Activated T-helper 2 cell treated with anti-CD3 and anti-CD28 coated beads, Interferon-gamma antibody, Interleukin-2, Interleukin-4, amounts not matched to agents 10 μg/mL and 5 μg/mL and 100 μg/mL, durations not matched to agents 14 hours and 24 hours and 36 hours (primary cell): ENCODE measurements at regions of chr10 and their contacts with region 1.

Region 1: DNA sequence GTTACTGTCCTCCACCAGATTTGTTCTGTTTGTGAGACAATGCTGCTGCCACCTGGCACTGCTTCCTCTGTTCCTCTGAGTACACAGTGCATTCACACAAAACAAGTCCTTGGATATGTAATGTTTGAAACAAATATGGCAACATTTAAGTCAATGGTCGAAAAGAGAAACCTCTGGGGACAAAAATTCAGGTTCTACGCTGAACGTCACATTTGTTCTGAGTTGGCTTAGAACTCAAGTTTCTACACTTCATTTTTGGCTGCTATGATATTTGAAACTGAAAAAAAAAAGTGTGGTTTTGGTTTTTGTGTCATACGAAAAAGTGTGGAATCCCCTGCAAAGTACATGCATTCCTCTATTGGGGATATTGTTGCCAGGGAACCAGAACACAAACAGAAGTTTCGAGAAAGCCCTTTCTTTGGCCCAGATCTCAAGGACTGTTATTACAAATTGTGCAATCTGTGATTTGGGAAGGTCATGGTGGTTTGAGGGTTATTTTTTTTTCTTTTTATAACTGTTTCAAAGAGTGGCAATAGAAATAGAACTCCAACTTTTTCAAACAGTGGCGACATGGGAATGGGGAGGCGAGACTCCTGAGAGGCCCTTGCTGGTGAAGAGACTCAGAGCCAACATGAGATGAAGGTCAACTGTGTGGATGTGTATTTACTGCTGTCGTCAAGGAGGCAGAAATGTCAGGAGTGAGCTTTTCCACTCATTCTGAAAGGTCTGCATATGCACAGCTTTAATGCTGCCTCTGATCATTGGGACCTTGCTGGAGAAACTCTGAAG is 127.5 kb downstream of the CUBN start:
- DNase-seq: no peak
- H3K4me3 Mint-ChIP-seq: peak overlapping the region; percentile 46
- H3K27ac Mint-ChIP-seq: peak overlapping the region; percentile 99
- H3K4me1 Mint-ChIP-seq: peaks cover 33% of the 10 kb centered on the region
- H3K27me3 Mint-ChIP-seq: peaks cover 69% of the 10 kb centered on the region

Region 2: DNA sequence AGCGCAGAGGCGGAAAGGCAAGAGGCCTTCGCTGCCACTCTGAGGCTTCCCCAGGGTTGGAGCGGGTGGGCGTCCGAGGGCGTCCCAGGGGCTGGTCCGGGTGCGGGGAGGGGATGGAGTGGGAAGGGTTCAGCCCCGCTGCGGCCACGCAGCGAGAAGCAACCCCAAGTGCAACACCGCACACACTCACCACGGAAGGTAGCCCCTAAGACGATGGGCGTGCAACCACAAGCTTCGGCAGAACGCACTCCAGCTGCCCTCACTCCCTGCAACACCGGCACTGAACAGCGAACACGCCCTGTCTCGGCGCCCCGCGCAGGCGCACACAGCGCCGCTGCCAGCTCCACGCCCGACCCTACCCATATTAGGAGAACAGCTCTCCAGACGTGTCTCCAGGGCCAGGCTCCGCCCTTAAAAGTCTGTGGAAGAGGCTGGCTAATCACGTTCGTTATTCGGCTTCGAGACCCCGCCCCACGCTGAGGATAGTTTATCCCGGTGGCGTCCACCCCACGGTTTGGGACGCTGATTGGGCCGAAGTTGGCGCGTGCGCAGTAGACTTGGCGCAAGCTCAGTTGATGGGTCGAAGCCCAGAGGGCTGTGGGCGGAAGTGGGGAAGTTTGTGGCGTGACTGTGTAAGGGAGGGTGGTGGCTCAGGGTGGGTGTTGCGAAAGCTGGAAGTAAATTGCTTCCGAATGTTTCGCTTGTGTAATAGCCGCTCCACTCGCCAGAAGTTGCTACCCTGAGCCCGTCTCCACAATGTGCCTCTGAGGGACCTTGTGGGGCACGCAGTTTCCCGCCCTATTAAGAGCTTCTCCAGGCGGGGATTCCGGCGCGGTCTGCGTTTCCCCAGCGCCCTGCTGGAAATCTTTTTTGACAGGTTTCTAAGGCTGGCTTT is 184.8 kb before region 1 on chr10 and contains the start of gene RSU1:
- intact Hi-C with region 1: loop called (anchors 1 kb)
- DNase-seq: peak; percentile 100
- H3K4me3 Mint-ChIP-seq: peak within 1 kb of the TSS; percentile 93
- H3K27ac Mint-ChIP-seq: peak within 1 kb of the TSS; percentile 79
- H3K4me1 Mint-ChIP-seq: peaks cover 27% of the 10 kb centered on the region
- H3K27me3 Mint-ChIP-seq: peaks cover 10% of the 10 kb centered on the region
- total RNA-seq, gene RSU1: 49.1 and 54.0 TPM in 2 replicates

Region 3: DNA sequence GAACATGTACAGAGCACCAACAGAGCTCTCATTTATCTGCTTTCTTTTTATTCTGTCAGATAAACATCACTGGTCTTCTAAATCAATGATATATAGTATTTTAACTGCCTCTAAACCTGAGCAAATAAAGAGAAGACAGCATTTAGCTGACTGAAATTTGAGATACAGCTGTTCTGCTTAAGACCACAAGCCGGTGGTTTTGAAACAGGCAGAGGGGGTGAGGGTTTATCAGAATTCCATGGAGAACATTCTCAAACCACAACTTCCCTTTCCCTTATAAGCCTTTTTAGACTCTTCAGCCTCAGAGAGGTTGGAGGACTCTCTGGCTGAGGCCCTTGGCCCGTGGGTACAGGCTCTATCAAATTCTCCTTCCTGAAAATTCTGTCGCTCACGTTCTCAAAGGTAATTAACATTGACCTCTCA is 97.5 kb before region 1 on chr10:
- intact Hi-C with region 1: loop called (anchors 2 kb)
- DNase-seq: no peak
- H3K4me3 Mint-ChIP-seq: no peak overlapping the region
- H3K27ac Mint-ChIP-seq: no peak overlapping the region
- H3K4me1 Mint-ChIP-seq: peaks cover 7% of the 10 kb centered on the region
- H3K27me3 Mint-ChIP-seq: peaks cover 6% of the 10 kb centered on the region

Region 4: DNA sequence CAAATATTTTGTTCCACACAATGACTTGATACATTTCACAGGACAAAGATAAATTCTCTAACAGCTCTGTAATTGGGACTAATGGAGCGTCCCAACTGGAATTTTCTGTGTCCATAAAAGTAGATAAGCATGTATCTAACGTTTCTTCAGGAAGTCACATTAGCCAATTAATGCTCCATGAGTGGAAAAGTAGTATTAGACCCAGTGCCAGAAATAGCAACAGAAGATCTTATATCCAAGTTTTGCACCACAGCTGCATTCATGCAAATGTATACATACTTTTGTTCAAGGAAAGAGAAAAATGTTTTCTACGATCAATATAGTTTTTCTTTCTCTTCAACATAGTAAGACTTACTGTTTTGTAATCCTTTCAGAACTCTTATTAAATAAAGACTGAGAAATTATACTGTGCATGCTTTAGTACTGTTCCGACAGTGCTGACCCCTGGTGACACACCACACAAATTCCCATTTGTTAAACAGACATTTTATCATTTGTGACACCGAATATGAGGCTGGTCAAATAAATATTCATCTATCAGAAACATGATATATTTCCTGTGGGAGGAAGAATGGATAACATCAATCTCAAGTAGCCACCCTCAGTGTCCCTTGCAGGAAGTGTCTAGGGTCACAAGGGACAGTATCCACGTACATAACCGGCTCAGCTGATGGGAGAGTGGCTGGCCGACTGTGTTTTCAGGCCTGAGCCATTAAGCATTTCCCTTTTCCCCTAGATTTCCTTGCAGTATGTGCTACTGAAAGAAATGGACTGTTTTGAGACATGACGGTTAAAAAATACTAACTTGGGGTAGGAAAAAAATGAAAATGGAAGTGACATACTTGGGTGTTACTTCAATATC is 82.8 kb before region 1 on chr10:
- intact Hi-C with region 1: no loop called
- DNase-seq: no peak
- H3K4me3 Mint-ChIP-seq: no peak overlapping the region
- H3K27ac Mint-ChIP-seq: no peak overlapping the region
- H3K4me1 Mint-ChIP-seq: no peaks in the 10 kb centered on the region
- H3K27me3 Mint-ChIP-seq: peaks cover 6% of the 10 kb centered on the region

Region 5: DNA sequence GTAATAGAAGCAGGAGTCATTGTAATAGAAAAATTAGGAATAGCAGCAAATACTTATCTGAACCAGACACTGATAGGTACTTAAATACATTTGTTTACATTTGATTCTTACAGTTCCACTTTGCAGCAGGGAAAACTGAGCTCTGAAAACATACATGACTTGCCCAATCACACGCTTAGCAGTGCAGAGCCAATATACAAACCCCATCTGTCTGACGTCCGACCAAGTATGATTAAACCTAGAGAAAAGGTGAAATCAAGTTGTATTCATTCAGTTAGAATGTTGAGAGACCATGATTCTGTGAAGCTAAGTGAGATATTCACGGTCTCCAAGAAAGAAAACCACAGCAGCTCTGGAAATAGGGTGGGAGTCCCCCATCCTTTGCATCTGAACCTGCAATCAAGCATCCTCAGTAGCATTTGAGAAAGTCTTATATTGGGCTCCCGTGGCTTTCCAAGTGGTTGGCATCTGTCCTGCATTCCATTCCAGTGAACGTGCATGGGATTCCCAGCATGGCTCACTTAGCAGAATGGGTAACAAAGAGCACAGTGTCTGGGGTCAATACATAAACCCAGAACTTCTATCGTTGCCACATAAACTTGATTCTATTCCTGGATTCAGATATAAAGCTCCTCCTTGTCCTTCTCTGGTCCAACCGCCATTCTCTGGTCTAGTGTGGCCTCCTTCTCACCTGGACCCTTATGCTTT is 36.3 kb before region 1 on chr10:
- intact Hi-C with region 1: loop called (anchors 2 kb)
- DNase-seq: no peak
- H3K4me3 Mint-ChIP-seq: no peak overlapping the region
- H3K27ac Mint-ChIP-seq: no peak overlapping the region
- H3K4me1 Mint-ChIP-seq: peaks cover 12% of the 10 kb centered on the region
- H3K27me3 Mint-ChIP-seq: peaks cover 28% of the 10 kb centered on the region

Region 6: DNA sequence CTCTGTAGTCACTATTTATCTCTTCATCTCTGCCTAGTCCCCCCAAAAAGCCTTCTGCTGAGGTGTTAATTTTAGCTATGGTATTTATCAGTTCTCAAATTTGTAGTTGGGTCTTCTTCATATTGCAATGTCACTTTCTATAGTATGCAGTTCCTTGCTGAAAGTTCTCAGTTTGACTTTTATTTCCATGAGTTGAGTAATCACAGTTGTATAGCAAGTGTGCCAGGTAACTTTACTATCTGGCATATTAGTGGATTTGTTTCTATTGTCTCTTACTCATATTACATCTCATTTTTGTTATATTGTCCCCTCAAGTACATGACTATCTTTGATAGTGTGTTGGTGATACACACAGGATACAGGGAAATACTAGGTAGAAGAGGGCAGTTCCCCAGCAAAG is 25.4 kb before region 1 on chr10:
- intact Hi-C with region 1: no loop called
- DNase-seq: no peak
- H3K4me3 Mint-ChIP-seq: no peak overlapping the region
- H3K27ac Mint-ChIP-seq: no peak overlapping the region
- H3K4me1 Mint-ChIP-seq: peaks cover 7% of the 10 kb centered on the region
- H3K27me3 Mint-ChIP-seq: peaks cover 29% of the 10 kb centered on the region

Region 7: DNA sequence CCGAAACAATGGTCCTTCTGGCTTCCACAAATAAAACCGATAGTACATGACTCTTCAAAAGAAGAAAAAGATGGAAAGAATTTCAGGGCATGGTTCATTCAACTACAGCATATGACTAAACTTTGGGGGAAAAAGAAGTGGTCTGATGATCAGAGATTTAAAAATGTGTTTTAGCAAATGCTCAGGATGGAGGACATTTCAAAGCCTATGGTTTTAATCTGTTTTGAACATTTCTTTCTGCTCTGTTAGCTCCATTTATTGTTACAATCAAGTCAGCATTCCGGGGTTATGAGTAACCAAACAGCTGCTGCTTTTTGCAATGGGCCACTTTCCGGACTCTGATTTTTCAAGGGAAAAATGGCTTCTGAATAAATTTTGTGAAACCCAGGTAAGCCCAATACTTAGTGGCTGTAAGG is 14.9 kb before region 1 on chr10:
- intact Hi-C with region 1: no loop called
- DNase-seq: no peak
- H3K4me3 Mint-ChIP-seq: no peak overlapping the region
- H3K27ac Mint-ChIP-seq: no peak overlapping the region
- H3K4me1 Mint-ChIP-seq: no peaks in the 10 kb centered on the region
- H3K27me3 Mint-ChIP-seq: peaks cover 13% of the 10 kb centered on the region

Region 8: GRCh38 chr10:17144757-17145156 is 142.6 kb after region 1 on chr10:
- intact Hi-C with region 1: loop called (anchors 1 kb)
- DNase-seq: peak; percentile 50
- H3K4me3 Mint-ChIP-seq: no peak overlapping the region
- H3K27ac Mint-ChIP-seq: peak overlapping the region; percentile 50
- H3K4me1 Mint-ChIP-seq: peaks cover 37% of the 10 kb centered on the region
- H3K27me3 Mint-ChIP-seq: peaks cover 1% of the 10 kb centered on the region

Region 9: DNA sequence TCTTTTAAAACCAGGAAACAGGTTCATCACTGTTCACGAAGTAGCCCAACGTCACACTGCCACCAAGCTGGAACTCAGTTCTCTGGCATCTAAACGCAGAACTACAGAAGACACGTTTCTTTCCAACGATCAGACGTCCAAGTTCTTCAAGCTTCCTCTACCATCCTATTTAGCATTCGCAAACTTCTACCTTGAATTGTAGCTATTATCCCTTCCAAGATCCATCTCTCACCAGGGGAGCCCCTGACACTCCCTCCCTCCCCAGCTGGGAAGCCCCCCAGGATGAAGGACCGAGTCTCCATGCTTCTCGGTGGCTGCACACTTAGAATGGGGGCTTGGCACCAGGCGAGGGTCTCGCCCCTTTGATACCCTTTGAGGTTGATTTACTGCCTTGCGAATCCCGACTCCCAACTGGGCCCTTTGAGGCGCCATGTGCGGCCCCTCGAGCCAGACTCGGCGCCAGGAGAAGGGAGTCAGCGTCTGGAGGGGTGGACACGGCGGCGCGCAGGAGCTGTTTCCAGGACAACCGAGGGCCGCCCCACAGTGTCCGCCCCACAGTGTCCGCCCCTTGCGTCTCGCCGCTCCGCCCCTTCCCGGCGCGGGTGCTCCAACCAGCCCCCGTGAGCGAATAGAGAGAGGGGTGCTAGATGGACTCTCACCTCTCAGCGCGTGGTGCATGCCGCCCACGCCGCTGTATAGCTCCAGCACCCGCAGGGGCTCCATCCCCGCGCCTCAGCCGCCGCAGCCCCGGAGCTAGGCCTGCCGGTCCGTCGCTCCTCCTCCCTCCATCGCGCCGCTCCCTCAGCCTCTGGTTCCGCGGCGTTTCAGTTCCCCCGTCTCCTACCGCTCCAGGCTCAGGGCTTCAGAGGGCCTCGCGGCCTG is 199.0 kb after region 1 on chr10 and contains the start of gene TRDMT1:
- intact Hi-C with region 1: loop called (anchors 1 kb)
- DNase-seq: peak; percentile 77
- H3K4me3 Mint-ChIP-seq: peak within 1 kb of the TSS; percentile 96
- H3K27ac Mint-ChIP-seq: peak within 1 kb of the TSS; percentile 77
- H3K4me1 Mint-ChIP-seq: peaks cover 49% of the 10 kb centered on the region
- H3K27me3 Mint-ChIP-seq: peaks cover 7% of the 10 kb centered on the region
- total RNA-seq, gene TRDMT1: 3.2 and 4.2 TPM in 2 replicates

Region 10: DNA sequence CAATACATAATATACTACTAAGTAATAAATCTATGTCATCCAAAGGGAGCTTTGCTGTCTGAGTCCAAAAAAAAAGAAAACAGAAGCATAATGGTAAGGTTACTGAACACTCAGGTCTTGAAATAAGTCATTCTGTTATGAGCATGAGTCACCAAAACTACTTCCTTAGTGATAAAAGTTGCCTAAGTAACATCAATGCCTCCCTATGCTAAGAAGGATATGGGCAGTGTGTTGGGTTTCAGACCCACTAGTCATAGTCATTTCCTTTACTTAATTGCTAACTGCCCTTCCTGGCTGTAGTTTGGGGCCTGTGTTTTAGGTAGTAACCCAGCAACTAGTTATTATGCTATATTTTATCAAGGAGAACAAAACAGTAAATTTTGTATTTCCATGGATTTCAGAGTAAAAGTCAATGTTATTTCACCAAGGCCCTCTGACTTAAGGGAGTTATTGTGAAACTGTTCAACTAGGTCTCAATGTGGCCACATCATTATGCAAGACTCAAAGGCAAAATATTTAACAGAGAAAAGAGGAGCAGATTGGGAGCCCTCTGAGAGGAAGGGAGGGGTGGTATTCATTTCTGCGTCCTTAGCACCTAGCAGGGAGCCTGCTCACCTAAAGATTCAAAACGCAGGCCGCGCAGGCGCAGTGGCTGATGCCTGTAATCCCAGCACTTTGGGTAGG is 214.2 kb after region 1 on chr10:
- intact Hi-C with region 1: loop called (anchors 1 kb)
- DNase-seq: peak; percentile 43
- H3K4me3 Mint-ChIP-seq: no peak overlapping the region
- H3K27ac Mint-ChIP-seq: peak overlapping the region; percentile 94
- H3K4me1 Mint-ChIP-seq: peaks cover 43% of the 10 kb centered on the region
- H3K27me3 Mint-ChIP-seq: no peaks in the 10 kb centered on the region

Region 11: DNA sequence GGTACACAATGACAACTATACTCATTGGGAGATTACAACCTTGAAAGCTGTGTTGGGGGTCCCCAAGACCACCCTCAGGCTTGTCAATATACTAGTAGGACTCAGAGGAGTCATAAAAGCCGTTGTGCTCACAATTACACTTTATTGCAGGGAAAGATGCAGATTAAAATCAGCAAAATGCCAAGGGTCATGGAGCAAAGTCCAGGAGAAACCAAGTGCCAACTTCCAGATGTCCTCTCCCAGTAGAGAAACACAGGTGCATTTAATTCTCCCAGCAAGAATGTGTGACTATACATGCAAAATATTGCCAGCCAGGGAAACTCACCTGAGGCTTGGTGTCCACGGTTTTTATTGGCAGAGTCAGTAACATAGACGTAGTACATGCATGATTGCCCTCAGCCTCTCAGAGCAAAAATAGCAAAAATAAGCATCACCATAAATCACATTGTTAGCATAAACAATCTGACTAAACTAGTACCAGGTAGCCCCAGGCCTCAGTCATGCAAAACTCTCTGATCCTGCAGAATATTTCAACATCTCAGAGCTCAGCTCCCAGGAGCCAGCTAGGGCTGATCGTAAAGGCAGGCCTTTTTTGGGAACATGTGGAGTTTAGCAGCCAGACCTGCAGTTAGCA is 276.6 kb after region 1 on chr10:
- intact Hi-C with region 1: no loop called
- DNase-seq: no peak
- H3K4me3 Mint-ChIP-seq: no peak overlapping the region
- H3K27ac Mint-ChIP-seq: no peak overlapping the region
- H3K4me1 Mint-ChIP-seq: no peaks in the 10 kb centered on the region
- H3K27me3 Mint-ChIP-seq: peaks cover 2% of the 10 kb centered on the region